Posterior vena cava (tissue), 2 donors: ENCODE measurements at regions of chr7 and their contacts with region 1.

Region 1: GRCh38 chr7:75739796-75740672 is 1.3 kb upstream of the HIP1 start:
- DNase-seq: no peak

Region 2: GRCh38 chr7:75559355-75559975 is 180.6 kb before region 1 on chr7:
- intact Hi-C with region 1: loop called in 1 of 2 experiments (anchors 10 kb)
- DNase-seq: no peak

Region 3: GRCh38 chr7:75611548-75612178 is 128.4 kb before region 1 on chr7:
- intact Hi-C with region 1: no loop called
- DNase-seq: peak; percentile 88